ENCODE measurements at regions of chr10 and their contacts with region 1.

Region 1: DNA sequence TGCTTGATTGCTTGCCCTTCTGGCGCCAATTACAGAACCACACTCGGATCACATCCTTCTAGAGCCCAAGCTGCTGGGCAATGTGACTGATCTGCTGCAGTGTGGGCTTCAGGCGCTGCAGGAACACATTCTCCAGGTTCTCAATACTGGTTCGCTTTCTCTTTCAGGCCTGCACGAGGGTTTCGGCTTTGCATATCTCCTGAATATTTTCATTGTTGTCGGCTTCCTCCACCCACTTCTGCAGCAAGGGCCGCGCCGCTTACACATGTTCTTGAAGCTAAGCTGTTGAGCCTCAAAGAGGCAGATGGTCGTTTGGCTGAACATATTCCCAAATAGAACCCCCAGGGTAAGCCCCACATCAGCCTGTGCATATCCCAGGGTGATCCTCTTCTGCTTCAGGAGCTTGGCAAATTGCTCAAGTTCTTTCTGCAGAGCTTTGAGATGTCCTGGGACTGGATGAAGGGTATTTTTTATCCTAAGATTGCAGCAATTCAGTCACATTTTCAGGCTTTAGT is 64.6 kb downstream of the HERC4 start:
- DNase-seq: no peak
- ATAC-seq: no peak
- H3K4me3 ChIP-seq: no peak overlapping the region
- H3K4me3 Mint-ChIP-seq: no peak overlapping the region
- H3K27ac ChIP-seq: no peak overlapping the region
- H3K27ac Mint-ChIP-seq: no peak overlapping the region
- H3K4me1 ChIP-seq: no peaks in the 10 kb centered on the region
- H3K4me1 Mint-ChIP-seq: no peaks in the 10 kb centered on the region
- H3K27me3 ChIP-seq: no peaks in the 10 kb centered on the region
- H3K27me3 Mint-ChIP-seq: no peaks in the 10 kb centered on the region
- CTCF ChIP-seq: no peak

Region 2: DNA sequence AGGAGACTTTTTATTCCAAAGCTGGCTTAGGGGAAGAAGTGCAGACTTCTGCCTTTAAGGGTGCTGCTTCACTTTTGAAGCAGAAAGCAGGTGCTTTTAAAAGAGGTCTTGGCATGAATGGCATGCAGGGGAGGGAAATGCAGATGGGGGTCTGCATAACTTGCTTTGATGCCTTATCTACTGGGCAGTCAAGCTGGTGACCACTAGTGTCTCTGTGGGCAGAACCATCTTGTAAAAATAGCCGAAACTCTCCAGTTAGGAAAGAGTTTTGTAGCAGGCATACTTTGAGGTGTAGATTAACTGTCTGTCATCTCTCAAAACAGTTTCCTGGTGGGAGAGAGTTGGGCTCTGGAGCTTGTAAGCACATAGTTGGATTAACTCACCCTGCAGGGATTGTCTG is 304.6 kb before region 1 on chr10:
- CTCF ChIA-PET with region 1: no interaction called
- POLR2A ChIA-PET with region 1: no interaction called
- intact Hi-C with region 1: no loop called
- DNase-seq: no peak
- ATAC-seq: no peak
- H3K4me3 ChIP-seq: no peak overlapping the region
- H3K4me3 Mint-ChIP-seq: no peak overlapping the region
- H3K27ac ChIP-seq: no peak overlapping the region
- H3K27ac Mint-ChIP-seq: no peak overlapping the region
- H3K4me1 ChIP-seq: no peaks in the 10 kb centered on the region
- H3K4me1 Mint-ChIP-seq: no peaks in the 10 kb centered on the region
- H3K27me3 ChIP-seq: peaks cover 0 to 4% (median 0%) of the 10 kb centered on the region in 4 experiments
- H3K27me3 Mint-ChIP-seq: peaks cover 11% of the 10 kb centered on the region
- CTCF ChIP-seq: no peak

Region 3: DNA sequence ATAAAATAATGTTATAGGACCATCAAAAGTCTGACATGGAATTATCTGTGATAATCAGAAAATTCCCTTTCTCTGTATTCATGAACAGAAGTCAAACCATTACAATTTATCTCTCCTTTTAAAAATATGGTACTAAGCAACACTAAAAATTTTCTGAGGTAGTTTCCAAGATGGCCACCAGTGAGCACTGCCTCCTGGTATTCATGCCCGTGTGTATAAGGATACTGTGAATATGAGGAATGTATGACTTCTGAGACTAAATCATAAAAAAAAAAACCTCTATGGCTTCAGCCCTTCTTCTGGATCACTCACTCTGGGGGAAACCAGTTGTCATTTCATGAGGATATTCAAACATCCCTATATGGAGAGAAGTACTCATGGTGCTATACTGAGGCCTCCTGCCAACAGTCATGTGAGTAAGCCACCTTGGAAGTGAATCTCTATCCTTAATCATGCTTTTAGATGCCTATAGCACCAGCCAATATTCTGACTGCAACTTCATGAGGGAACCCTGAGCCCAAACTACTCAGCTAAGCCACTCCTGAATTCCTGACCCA is 85.0 kb before region 1 on chr10:
- CTCF ChIA-PET with region 1: no interaction called
- POLR2A ChIA-PET with region 1: no interaction called
- intact Hi-C with region 1: no loop called
- DNase-seq: no peak
- ATAC-seq: no peak
- H3K4me3 ChIP-seq: no peak overlapping the region
- H3K4me3 Mint-ChIP-seq: no peak overlapping the region
- H3K27ac ChIP-seq: no peak overlapping the region
- H3K27ac Mint-ChIP-seq: no peak overlapping the region
- H3K4me1 ChIP-seq: no peaks in the 10 kb centered on the region
- H3K4me1 Mint-ChIP-seq: no peaks in the 10 kb centered on the region
- H3K27me3 ChIP-seq: no peaks in the 10 kb centered on the region
- H3K27me3 Mint-ChIP-seq: no peaks in the 10 kb centered on the region
- CTCF ChIP-seq: no peak

Region 4: GRCh38 chr10:68052463-68052862 is 42.0 kb after region 1 on chr10:
- CTCF ChIA-PET with region 1: no interaction called
- POLR2A ChIA-PET with region 1: no interaction called
- intact Hi-C with region 1: no loop called
- DNase-seq: no peak
- ATAC-seq: no peak
- H3K4me3 ChIP-seq: no peak overlapping the region
- H3K4me3 Mint-ChIP-seq: no peak overlapping the region
- H3K27ac ChIP-seq: peak overlapping the region in 1 of 2 donors; percentile 50
- H3K27ac Mint-ChIP-seq: peak overlapping the region; percentile 34
- H3K4me1 ChIP-seq: peaks cover 2 to 23% of the 10 kb centered on the region in 2 donors
- H3K4me1 Mint-ChIP-seq: peaks cover 33% of the 10 kb centered on the region
- H3K27me3 ChIP-seq: no peaks in the 10 kb centered on the region
- H3K27me3 Mint-ChIP-seq: no peaks in the 10 kb centered on the region
- CTCF ChIP-seq: no peak

Region 5: DNA sequence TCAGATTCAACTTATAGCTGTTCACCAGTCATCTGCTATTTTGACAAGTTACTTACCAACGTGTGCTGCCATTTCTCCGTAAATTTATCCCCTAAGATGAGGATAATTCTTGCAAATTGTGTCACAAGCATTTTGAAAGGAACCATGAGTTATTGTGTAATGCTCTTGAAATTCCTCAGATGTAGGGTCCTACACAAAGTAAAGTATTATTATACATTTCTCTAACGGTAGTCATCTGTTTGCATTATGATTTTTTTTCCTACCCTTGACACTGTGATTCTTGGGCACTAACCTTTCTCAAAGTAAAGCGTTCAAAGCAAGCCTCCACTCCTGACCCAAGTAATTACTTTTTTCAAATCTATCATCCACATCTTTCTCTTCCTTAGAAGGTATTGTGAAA is 56.5 kb after region 1 on chr10:
- CTCF ChIA-PET with region 1: no interaction called
- POLR2A ChIA-PET with region 1: no interaction called
- intact Hi-C with region 1: no loop called
- DNase-seq: no peak
- ATAC-seq: no peak
- H3K4me3 ChIP-seq: no peak overlapping the region
- H3K4me3 Mint-ChIP-seq: no peak overlapping the region
- H3K27ac ChIP-seq: no peak overlapping the region
- H3K27ac Mint-ChIP-seq: no peak overlapping the region
- H3K4me1 ChIP-seq: peaks cover 0 to 16% of the 10 kb centered on the region in 2 donors
- H3K4me1 Mint-ChIP-seq: peaks cover 29% of the 10 kb centered on the region
- H3K27me3 ChIP-seq: no peaks in the 10 kb centered on the region
- H3K27me3 Mint-ChIP-seq: no peaks in the 10 kb centered on the region
- CTCF ChIP-seq: no peak

Region 6: GRCh38 chr10:68156373-68157185 is 146.1 kb after region 1 on chr10:
- CTCF ChIA-PET with region 1: no interaction called
- POLR2A ChIA-PET with region 1: no interaction called
- intact Hi-C with region 1: loop called (anchors 10 kb)
- DNase-seq: peak; percentile 74
- ATAC-seq: no peak
- H3K4me3 ChIP-seq: no peak overlapping the region
- H3K4me3 Mint-ChIP-seq: no peak overlapping the region
- H3K27ac ChIP-seq: no peak overlapping the region
- H3K27ac Mint-ChIP-seq: no peak overlapping the region
- H3K4me1 ChIP-seq: no peaks in the 10 kb centered on the region
- H3K4me1 Mint-ChIP-seq: no peaks in the 10 kb centered on the region
- H3K27me3 ChIP-seq: no peaks in the 10 kb centered on the region
- H3K27me3 Mint-ChIP-seq: peaks cover 5% of the 10 kb centered on the region
- CTCF ChIP-seq: peak; percentile 90

Measured in B cell (primary cell).